ENCODE measurements at regions of chr22 and their contacts with region 1.

Region 1: DNA sequence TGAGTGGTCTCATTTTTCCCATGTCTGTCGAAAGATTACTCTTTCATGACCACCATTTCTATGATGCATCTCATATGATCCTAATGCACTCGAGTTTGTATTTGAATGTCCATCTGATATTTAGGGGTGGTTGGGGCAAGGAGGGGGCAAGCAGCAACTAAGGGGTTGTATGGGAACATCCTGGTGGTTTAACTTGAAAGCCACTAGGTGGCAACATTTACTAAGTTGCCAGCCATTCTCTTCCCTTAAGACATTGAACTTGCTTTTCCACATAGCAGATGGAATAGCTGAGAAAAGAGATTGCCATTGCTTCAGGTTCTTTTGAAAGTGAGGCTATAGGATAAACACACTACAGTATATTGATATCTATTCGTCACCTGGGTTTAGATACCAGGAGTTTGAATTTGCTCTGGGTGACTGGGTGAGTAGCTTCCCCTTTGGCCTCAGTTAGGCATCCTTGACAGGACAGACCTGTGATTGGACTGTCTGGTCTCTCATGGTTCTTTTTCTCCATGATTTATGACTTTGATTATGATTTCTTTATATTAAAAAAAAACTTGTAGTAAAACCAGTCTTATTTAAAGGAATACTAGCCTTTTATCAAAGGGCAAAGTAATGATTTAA is 32.4 kb downstream of the NF2 start:
- DNase-seq: no peak
- H3K4me3 ChIP-seq: no peak overlapping the region
- H3K27ac ChIP-seq: no peak overlapping the region
- H3K4me1 ChIP-seq: no peaks in the 10 kb centered on the region
- H3K27me3 ChIP-seq: no peaks in the 10 kb centered on the region
- CTCF ChIP-seq: peak; percentile 44 to 54

Region 2: DNA sequence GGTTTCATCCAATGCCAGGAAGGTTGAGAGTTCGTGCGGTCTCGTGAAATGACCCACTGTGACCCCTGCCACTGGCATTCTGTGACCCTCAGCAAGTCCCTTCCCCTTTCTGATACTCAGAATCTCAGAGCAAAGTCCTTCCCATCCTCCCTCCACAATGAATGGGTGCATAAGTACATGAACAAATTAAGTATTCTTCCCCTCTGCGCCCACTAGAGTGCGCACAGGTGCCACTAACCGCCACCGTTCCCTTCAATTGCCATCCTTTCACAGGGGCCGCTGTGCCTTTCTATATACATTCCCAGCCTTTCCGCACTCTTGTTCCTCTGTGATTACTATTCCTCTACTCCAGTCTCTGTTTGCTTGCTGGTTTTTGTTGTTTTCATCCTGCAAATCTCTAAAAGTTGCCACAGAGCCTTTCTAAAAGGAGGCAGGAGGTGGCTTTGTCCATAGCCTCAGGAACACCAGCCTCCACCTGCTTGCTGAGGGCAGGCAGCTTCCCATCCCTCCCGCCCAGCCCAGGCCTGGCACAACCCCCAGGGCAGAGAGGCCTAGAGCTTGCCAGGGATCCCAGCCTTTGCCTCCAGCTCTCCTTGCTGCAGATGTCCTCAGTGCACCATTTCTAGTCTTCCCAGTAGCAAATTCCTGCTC is 240.8 kb before region 1 on chr22:
- intact Hi-C with region 1: no loop called
- DNase-seq: peak; percentile 71 to 72
- H3K4me3 ChIP-seq: no peak overlapping the region
- H3K27ac ChIP-seq: no peak overlapping the region
- H3K4me1 ChIP-seq: peaks cover 0 to 4% (median 0%) of the 10 kb centered on the region in 4 donors
- H3K27me3 ChIP-seq: no peaks in the 10 kb centered on the region
- CTCF ChIP-seq: peak; percentile 62 to 80

Region 3: GRCh38 chr22:29617922-29618629 is 17.8 kb before region 1 on chr22:
- intact Hi-C with region 1: no loop called
- DNase-seq: no peak
- H3K4me3 ChIP-seq: no peak overlapping the region
- H3K27ac ChIP-seq: no peak overlapping the region
- H3K4me1 ChIP-seq: peaks cover 0 to 37% (median 17%) of the 10 kb centered on the region in 4 donors
- H3K27me3 ChIP-seq: no peaks in the 10 kb centered on the region
- CTCF ChIP-seq: no peak

Region 4: DNA sequence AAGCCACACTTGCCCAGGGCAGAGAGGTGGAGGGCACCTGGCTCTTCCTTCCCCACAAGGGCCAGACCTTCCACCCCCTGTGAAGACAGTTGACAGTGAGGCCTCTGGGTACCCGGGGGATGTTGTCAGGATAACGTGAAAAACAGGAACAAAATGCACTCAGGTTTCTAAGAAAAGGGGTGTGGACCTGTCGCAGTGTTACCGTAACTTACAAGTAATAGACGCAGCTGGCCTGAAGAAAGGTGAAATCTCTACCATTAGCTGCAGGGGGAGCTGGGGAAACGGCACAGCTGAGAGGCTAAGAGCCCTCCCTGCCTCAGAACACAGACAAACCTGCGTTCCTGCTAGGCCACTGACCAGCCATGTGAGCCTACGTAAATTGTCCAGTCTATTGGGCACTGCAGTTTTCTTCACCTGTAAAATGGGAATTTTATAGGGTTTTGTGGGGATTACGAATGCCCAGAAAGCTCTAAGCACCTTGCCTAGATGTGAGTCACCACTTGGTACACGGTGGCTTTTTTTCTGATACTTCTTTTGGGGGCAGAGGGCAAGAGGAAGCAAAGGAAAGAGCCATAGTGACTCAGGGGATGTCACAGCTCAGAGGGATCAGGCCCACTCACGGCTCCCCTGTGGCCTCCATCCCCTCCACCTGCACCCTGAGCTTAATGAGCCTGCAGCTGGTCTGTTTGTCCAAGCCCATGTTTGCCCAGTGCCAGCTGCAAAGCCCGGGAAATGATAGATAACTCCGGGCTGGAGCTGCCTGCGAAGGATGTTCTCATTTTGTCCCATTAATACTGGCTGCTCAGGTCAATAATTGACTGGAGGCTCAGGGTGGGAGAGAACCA is 65.5 kb after region 1 on chr22:
- intact Hi-C with region 1: no loop called
- DNase-seq: no peak
- H3K4me3 ChIP-seq: no peak overlapping the region
- H3K27ac ChIP-seq: no peak overlapping the region
- H3K4me1 ChIP-seq: peaks cover 0 to 18% (median 7%) of the 10 kb centered on the region in 4 donors
- H3K27me3 ChIP-seq: peaks cover 0 to 66% of the 10 kb centered on the region in 2 donors
- CTCF ChIP-seq: no peak

Region 5: DNA sequence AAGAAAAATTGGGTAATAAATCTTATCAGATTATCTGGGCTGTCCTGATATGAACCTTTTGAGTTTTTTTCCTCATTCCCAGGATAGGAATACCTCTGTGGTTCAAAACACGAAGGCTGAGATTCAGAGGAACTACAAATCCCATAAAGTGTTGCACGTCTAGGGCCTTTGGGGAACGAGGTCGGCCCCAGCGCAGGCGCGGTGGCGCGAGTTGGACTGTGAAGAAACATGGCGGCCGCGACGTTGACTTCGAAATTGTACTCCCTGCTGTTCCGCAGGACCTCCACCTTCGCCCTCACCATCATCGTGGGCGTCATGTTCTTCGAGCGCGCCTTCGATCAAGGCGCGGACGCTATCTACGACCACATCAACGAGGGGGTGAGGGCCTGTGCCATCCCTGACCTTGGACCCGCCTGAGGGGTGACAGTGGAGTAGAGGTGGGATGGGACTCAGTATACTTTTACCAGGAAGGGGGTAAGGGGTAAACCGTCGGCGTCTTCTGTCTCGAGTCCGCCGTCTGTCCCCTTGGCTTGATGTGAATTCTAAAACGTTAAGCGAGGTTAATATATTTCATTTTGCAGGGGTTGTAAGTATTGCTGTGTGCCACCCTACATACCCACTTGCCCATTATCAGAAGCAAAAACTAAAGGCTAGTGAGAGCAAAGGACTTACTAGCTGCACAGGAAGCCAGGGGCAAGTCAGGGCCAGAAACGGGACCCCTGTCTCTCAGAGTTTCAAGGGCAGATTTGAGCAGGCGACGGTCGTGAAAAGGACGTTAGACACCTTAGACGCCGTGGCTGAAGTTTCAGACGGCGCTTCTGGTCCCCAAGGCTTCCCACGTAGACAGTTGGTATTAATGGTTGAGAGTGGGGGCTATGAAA is 131.6 kb after region 1 on chr22 and contains the start of gene UQCR10:
- intact Hi-C with region 1: no loop called
- DNase-seq: peak; percentile 94
- H3K4me3 ChIP-seq: peak within 1 kb of the TSS; percentile 86 to 94
- H3K27ac ChIP-seq: peak within 1 kb of the TSS; percentile 84 to 92
- H3K4me1 ChIP-seq: peaks cover 0 to 27% (median 16%) of the 10 kb centered on the region in 4 donors
- H3K27me3 ChIP-seq: no peaks in the 10 kb centered on the region
- CTCF ChIP-seq: no peak

Region 6: DNA sequence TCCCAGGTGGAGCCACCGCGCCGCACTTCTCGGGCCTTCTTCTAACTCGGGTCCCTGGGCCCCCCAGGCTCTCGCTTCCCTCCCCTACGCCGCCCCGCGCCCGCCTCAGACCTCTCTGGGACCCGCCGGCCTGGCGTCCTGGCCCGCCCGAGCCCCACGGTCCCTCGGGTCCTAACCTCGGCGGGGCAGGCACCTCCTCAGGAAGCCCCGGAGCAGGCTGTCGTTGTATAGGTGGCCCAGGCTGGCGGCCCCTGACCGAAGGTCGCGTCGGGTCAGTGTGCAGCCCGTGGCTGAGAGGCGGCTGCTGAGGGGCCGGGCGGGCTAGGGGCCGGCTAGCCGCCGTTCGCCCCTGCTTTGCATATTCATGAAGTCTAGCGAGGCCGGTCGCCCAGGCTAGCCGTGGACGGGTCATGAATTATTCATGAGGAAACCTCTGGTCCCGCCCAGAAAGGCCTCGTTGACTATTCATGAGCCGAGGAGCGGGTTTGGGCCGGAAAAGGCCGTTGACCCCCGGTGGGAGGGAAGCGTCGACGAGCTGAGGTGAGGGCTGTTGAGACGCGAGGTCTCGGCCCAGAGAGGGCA is 444.2 kb after region 1 on chr22 and contains the start of gene HORMAD2:
- intact Hi-C with region 1: loop called (anchors 10 kb)
- DNase-seq: no peak
- H3K4me3 ChIP-seq: no peak within 1 kb of the TSS
- H3K27ac ChIP-seq: no peak within 1 kb of the TSS
- H3K4me1 ChIP-seq: peaks cover 0 to 3% (median 0%) of the 10 kb centered on the region in 4 donors
- H3K27me3 ChIP-seq: peaks cover 0 to 38% of the 10 kb centered on the region in 2 donors
- CTCF ChIP-seq: no peak